ENCODE measurements at regions of chr4 and their contacts with region 1.

Region 1: DNA sequence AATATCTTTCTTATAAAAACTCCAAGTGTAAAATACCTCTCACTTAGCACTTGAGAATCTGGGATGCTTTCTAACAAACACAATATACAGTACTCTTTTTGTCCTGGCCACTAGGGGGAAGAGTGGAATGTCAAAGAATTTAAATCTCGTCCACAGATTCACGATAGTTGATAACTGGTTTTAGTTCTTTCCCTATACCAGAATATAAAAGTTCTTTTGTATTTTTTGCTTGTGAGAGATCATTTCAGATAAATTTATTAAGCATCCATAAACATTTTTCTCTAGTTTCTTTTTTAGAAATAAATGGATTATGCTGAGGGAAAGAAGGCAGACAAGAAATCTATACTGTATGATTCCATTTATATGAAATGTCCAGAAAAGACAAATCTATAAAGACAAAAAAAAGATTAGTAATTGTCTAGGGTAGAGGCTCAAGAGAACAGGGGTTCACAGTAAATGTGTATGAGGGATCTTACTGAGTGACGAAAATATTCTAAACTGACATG is 50.4 kb downstream of the MGARP start:
- DNase-seq: no peak
- H3K4me3 ChIP-seq: no peak overlapping the region
- H3K27ac ChIP-seq: no peak overlapping the region
- H3K4me1 ChIP-seq: peaks cover 0 to 12% (median 0%) of the 10 kb centered on the region in 6 donors
- H3K27me3 ChIP-seq: no peaks in the 10 kb centered on the region
- CTCF ChIP-seq: peak; percentile 37 to 76 (median 66)
- POLR2A ChIP-seq: no peak

Region 2: DNA sequence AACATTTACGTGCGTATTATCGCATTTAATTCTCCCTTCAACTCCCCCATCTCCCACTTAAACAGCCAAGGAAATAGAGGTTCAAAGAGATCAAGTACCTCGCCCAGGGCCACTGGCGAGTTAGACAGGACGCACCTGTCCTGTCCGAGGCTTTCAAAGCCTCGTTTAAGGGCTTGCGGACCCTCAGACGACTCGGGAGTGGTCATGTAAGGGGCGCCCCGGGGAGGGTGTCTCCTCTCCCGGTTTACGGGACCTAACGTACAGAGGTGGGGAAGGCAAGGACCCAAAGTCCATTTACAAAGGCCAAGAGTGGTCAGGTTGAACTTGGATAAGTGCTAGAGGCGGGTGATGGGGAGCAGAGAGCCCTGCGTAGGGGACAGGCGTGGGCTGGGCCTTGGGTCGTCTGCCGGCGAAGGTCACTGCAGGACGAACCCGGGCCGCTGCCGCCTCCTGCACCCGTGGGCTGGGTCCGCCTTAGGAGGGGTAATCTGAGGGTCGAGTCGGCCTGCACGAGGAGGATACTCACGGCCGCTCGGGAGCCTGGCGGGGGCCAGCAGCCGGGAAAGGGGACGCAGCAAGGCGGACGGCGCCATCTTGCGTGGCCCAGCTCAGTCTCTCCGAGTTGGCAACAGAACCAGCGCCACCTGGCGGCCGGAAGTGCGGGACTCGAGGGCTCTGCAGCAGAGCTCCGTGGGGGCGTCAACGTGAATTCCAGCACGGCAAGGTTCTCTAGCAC is 65.8 kb after region 1 on chr4:
- intact Hi-C with region 1: loop called (anchors 5 kb)
- DNase-seq: peak; percentile 100
- H3K4me3 ChIP-seq: peak overlapping the region; percentile 41 to 96 (median 80)
- H3K27ac ChIP-seq: peak overlapping the region; percentile 54 to 93 (median 89)
- H3K4me1 ChIP-seq: peaks cover 14 to 76% (median 42%) of the 10 kb centered on the region in 6 donors
- H3K27me3 ChIP-seq: no peaks in the 10 kb centered on the region
- CTCF ChIP-seq: peak; percentile 83 to 99 (median 97)
- POLR2A ChIP-seq: no peak

Region 3: GRCh38 chr4:139841464-139842246 is 612.1 kb after region 1 on chr4:
- intact Hi-C with region 1: no loop called
- DNase-seq: no peak
- H3K4me3 ChIP-seq: no peak overlapping the region
- H3K27ac ChIP-seq: peak overlapping the region in 2 of 8 donors; percentile 28 to 38
- H3K4me1 ChIP-seq: peaks cover 0 to 50% (median 12%) of the 10 kb centered on the region in 6 donors
- H3K27me3 ChIP-seq: no peaks in the 10 kb centered on the region
- CTCF ChIP-seq: no peak
- POLR2A ChIP-seq: no peak

Measured in spleen (tissue), 13 donors.